Heart left ventricle (tissue), 16 donors: ENCODE measurements at regions of chr1 and their contacts with region 1.

Region 1: DNA sequence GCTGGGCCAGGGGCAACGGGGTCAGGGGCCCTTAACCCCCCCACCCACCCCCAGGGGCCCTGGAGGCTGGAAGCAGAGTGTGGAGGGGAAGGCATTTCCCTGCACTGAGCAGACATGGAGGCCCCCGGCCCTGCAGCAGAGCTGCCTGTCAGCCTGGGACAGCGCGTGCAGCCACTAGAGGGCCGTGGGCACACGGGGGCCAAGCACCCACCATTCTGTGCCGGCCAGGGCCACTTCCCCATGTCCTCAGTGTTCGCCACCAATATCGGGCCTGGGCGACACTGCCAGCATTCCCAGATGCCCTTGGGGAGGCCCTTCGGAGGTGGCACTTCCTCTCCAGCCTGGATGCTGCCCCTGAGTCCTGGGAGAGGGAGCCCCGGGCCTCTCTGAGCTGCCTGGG is 23.2 kb upstream of the ARHGEF16 start:
- DNase-seq: peak in 2 of 5 donors; percentile 14 to 43
- ATAC-seq: no peak
- H3K4me3 ChIP-seq: no peak overlapping the region
- H3K27ac ChIP-seq: no peak overlapping the region
- H3K4me1 ChIP-seq: no peaks in the 10 kb centered on the region
- H3K27me3 ChIP-seq: no peaks in the 10 kb centered on the region
- CTCF ChIP-seq: no peak
- POLR2A ChIP-seq: no peak

Region 2: GRCh38 chr1:2821966-2822620 is 609.2 kb before region 1 on chr1:
- intact Hi-C with region 1: loop called in 5 of 10 experiments (anchors 5 to 10 kb)
- DNase-seq: peak in 4 of 5 donors; percentile 40 to 71 (median 52)
- ATAC-seq: peak; percentile 79 to 88 (median 82)
- H3K4me3 ChIP-seq: no peak overlapping the region
- H3K27ac ChIP-seq: no peak overlapping the region
- H3K4me1 ChIP-seq: peaks cover 0 to 6% (median 0%) of the 10 kb centered on the region in 12 donors
- H3K27me3 ChIP-seq: peaks cover 0 to 30% (median 5%) of the 10 kb centered on the region in 9 donors
- CTCF ChIP-seq: peak; percentile 56 to 71 (median 62)
- POLR2A ChIP-seq: no peak

Region 3: GRCh38 chr1:3060601-3061551 is 370.4 kb before region 1 on chr1:
- intact Hi-C with region 1: loop called in 1 of 10 experiments (anchors 5 kb)
- DNase-seq: peak in 1 of 5 donors; percentile 40
- ATAC-seq: no peak
- H3K4me3 ChIP-seq: no peak overlapping the region
- H3K27ac ChIP-seq: no peak overlapping the region
- H3K4me1 ChIP-seq: peaks cover 0 to 34% (median 8%) of the 10 kb centered on the region in 12 donors
- H3K27me3 ChIP-seq: peaks cover 7 to 42% (median 24%) of the 10 kb centered on the region in 9 donors
- CTCF ChIP-seq: no peak
- POLR2A ChIP-seq: no peak